AG04450 (cell line): ENCODE measurements at regions of chr9 and their contacts with region 1.

Region 1: DNA sequence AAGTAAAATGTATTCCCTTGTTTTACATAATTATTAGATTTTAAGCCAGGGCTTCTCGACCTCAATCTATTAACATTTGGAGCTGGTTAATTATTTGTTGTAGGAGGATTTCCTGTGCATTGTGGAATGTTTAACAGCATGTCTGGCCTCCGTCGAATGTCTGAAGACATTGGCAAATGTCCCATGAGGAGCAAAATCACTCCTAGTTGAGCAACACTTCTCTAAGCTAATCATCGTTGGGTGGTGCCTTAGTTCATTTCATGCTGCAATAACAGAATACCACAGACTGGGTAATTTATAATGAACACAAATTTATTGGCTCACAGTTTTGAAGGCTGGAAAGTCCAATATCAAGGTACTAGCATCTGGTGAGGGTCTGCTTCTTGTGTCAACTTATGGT is 13.4 kb upstream of the VPS13A start:
- DNase-seq: no peak
- H3K4me3 ChIP-seq: no peak overlapping the region
- H3K27ac ChIP-seq: no peak overlapping the region
- H3K27me3 ChIP-seq: peaks cover 2% of the 10 kb centered on the region
- CTCF ChIP-seq: no peak

Region 2: GRCh38 chr9:77149879-77150278 is 14.0 kb before region 1 on chr9:
- CTCF ChIA-PET with region 1: interaction called, 25 read pairs
- POLR2A ChIA-PET with region 1: no interaction called
- DNase-seq: no peak
- H3K4me3 ChIP-seq: no peak overlapping the region
- H3K27ac ChIP-seq: no peak overlapping the region
- H3K27me3 ChIP-seq: peaks cover 3% of the 10 kb centered on the region
- CTCF ChIP-seq: no peak

Region 3: GRCh38 chr9:77177161-77177893 is 13.4 kb after region 1 on chr9 and contains the start of gene VPS13A:
- CTCF ChIA-PET with region 1: interaction called, 31 read pairs
- POLR2A ChIA-PET with region 1: no interaction called
- DNase-seq: peak; percentile 71
- H3K4me3 ChIP-seq: peak within 1 kb of the TSS; percentile 91
- H3K27ac ChIP-seq: peak within 1 kb of the TSS; percentile 73
- H3K27me3 ChIP-seq: no peaks in the 10 kb centered on the region
- CTCF ChIP-seq: peak; percentile 30
- polyA plus RNA-seq, gene VPS13A: 24.3 and 41.8 TPM in 2 replicates

Region 4: GRCh38 chr9:77183581-77183980 is 19.7 kb after region 1 on chr9:
- CTCF ChIA-PET with region 1: interaction called, 14 read pairs
- POLR2A ChIA-PET with region 1: no interaction called
- DNase-seq: no peak
- H3K4me3 ChIP-seq: no peak overlapping the region
- H3K27ac ChIP-seq: no peak overlapping the region
- H3K27me3 ChIP-seq: no peaks in the 10 kb centered on the region
- CTCF ChIP-seq: no peak

Region 5: DNA sequence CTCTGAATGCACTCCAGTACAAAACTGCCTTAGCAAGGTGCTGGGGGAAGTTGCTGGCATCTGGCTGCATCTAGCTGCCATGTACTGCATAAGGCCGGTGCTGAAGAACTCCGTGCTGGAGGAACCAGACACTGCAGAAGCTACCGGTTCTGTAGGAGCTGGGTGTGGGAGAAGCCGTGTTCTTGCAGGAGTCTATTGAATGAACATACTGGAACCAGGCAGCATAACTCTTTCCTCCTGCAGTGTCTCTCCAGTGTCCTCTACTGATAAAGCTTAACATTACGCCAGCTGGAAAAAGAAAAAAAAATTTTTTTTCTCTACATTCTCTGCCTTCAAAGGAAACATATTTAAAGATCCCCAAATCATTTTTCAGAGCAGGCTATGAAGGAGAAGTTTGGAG is 52.0 kb after region 1 on chr9:
- CTCF ChIA-PET with region 1: interaction called, 63 read pairs
- POLR2A ChIA-PET with region 1: no interaction called
- DNase-seq: no peak
- H3K4me3 ChIP-seq: no peak overlapping the region
- H3K27ac ChIP-seq: no peak overlapping the region
- H3K27me3 ChIP-seq: no peaks in the 10 kb centered on the region
- CTCF ChIP-seq: peak; percentile 47